PC-3 (cell line): ENCODE measurements at regions of chr2 and their contacts with region 1.

Region 1: DNA sequence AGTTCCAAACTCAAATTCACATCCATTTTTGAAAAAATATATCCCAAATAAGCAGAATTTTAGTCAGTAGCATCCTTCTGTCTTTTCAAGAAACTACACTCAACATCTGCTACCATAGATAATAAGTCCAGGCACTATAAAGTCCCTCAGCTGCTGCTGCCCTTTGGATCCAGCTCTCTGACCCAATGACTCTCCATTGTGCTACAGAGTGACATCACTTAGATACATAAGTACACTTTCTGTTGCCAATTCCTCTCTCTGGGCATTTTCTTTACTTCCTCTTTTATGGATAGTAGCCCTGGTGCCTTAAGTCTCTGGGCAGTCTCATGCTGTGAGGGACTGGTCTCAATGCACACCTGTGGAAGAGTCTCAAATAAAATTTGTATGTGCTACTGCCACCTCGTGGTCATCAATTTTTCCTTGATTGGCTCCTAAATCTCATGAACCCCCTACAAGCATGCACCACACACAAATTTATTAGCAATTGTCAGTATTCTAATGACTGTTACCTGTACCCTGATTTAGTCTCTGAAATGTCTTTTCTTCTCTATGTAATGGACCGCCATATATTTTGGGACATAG is 219.2 kb downstream of the LRP1B start:
- DNase-seq: peak; percentile 78
- ATAC-seq: peak; percentile 87
- H3K4me3 ChIP-seq: no peak overlapping the region
- H3K27ac ChIP-seq: no peak overlapping the region
- H3K4me1 ChIP-seq: no peaks in the 10 kb centered on the region
- H3K27me3 ChIP-seq: no peaks in the 10 kb centered on the region
- CTCF ChIP-seq: peak; percentile 67

Region 2: GRCh38 chr2:141611176-141611571 is 300.4 kb before region 1 on chr2:
- CTCF ChIA-PET with region 1: no interaction called
- POLR2A ChIA-PET with region 1: no interaction called
- intact Hi-C with region 1: loop called (anchors 5 kb)
- DNase-seq: peak; percentile 41
- ATAC-seq: peak; percentile 63
- H3K4me3 ChIP-seq: peak overlapping the region; percentile 40; the same call in 1 of the 2 replicates
- H3K27ac ChIP-seq: peak overlapping the region; percentile 79
- H3K4me1 ChIP-seq: peaks cover 24% of the 10 kb centered on the region
- H3K27me3 ChIP-seq: no peaks in the 10 kb centered on the region
- CTCF ChIP-seq: no peak

Region 3: GRCh38 chr2:141728886-141729285 is 182.7 kb before region 1 on chr2:
- CTCF ChIA-PET with region 1: no interaction called
- POLR2A ChIA-PET with region 1: no interaction called
- intact Hi-C with region 1: loop called (anchors 10 kb)
- DNase-seq: no peak
- ATAC-seq: no peak
- H3K4me3 ChIP-seq: no peak overlapping the region
- H3K27ac ChIP-seq: no peak overlapping the region
- H3K4me1 ChIP-seq: no peaks in the 10 kb centered on the region
- H3K27me3 ChIP-seq: no peaks in the 10 kb centered on the region
- CTCF ChIP-seq: no peak

Region 4: DNA sequence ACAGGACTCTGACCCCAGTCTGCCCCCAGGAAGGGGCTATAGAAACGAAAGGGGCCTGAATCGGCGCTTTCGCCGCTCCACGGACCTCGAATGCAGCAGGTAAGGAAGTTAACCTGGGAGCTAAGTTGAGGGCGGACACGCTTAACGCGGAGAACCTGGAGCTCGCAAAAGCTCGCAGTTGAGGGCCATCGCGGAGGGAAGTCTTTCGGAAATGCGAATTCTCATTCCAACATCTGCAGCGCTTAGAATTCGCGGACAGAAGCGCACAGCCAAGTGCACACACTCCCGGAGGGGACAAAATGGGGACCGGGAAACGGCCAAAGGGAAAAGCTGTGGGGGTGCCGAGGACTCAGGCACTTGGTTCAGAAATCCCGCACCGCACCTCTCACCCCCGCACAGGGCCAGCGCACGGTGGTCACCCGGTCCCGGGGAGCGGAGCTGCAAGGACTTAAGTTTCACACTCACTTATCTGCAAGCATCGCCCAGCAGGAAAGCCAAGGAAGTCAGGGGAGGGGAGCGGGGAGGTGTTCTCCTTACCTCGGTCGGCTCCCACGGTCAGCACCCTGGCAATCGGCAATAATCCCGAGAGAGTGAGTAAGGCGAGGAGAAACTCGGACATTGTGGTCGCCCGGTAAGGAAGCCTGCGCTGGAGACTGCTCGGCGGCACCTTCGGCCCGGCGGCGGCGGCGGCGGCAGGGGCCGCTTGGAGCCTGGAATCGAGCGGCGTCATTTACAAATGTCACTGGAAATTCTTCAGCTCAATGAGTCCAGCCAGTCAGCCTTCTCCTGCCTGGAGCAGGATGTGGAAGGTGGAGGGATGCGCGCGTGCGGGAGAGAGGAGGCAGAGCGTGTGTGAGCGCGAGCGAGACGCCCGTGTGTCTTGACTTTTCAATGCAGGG is 218.8 kb after region 1 on chr2:
- CTCF ChIA-PET with region 1: no interaction called
- POLR2A ChIA-PET with region 1: no interaction called
- intact Hi-C with region 1: loop called (anchors 5 kb)
- DNase-seq: peak; percentile 30
- ATAC-seq: peak; percentile 63
- H3K4me3 ChIP-seq: peak overlapping the region; percentile 60
- H3K27ac ChIP-seq: no peak overlapping the region
- H3K4me1 ChIP-seq: no peaks in the 10 kb centered on the region
- H3K27me3 ChIP-seq: peaks cover 17% of the 10 kb centered on the region
- CTCF ChIP-seq: no peak

Region 5: DNA sequence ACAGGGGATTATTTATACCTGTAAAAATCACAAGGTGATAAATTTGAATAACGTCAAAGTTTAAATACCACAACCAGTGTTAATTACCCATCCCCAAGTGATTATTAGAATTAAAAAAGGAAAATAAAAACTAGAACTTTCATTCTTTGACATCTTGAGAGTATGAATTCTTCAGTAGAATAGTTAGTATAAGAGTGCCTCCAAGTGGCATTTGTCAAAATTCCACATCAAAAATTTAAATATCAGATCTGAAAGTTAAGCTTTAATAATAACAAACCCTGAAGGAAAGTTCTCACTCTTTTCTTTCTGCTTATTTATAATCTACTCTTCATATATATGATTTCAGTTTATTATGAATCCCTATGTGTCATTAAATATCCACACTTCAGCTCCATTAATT is 692.2 kb after region 1 on chr2:
- CTCF ChIA-PET with region 1: no interaction called
- POLR2A ChIA-PET with region 1: no interaction called
- intact Hi-C with region 1: loop called (anchors 10 kb)
- DNase-seq: peak; percentile 59
- ATAC-seq: no peak
- H3K4me3 ChIP-seq: no peak overlapping the region
- H3K27ac ChIP-seq: no peak overlapping the region
- H3K4me1 ChIP-seq: peaks cover 26% of the 10 kb centered on the region
- H3K27me3 ChIP-seq: no peaks in the 10 kb centered on the region
- CTCF ChIP-seq: peak; percentile 71